ENCODE measurements at regions of chr6 and their contacts with region 1.

Region 1: DNA sequence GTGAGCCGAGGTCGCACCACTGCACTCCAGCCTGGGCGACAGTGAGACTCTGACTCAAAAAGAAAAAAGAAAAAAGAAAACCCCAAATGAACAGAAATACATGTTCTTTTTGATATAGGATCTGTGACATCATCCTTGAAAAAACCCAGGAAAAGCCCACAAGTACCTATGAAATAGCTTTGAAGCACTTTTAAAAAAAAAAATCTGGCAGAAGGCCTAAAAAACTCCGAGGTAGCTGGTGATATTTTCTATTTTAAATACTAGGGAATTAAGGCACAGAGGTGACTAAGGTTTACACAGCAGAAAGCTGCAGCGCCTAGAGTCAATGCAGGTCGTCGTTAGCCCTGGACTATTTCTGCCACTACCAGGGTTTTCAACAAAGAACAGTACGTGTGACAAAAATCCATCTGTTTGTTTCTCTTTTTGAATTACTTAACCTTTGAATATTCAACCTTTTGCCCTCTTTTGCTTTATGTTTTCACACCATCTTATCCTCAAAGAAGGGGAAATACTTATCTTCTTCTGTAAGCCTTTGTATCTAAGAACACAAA is 39.4 kb upstream of the EEF1A1 start:
- DNase-seq: no peak
- H3K4me3 ChIP-seq: no peak overlapping the region
- H3K27ac ChIP-seq: no peak overlapping the region
- H3K4me1 ChIP-seq: peaks cover 0 to 7% (median 4%) of the 10 kb centered on the region in 4 experiments; a peak in 5 of 7 replicates
- H3K27me3 ChIP-seq: no peaks in the 10 kb centered on the region
- CTCF ChIP-seq: no peak
- EP300 ChIP-seq: no peak
- POLR2A ChIP-seq: no peak
- RAD21 ChIP-seq: no peak

Region 2: GRCh38 chr6:73285674-73286283 is 274.5 kb before region 1 on chr6:
- CTCF ChIA-PET with region 1: no interaction called
- POLR2A ChIA-PET with region 1: no interaction called
- DNase-seq: no peak
- H3K4me3 ChIP-seq: no peak overlapping the region
- H3K27ac ChIP-seq: no peak overlapping the region
- H3K4me1 ChIP-seq: no peaks in the 10 kb centered on the region
- H3K27me3 ChIP-seq: no peaks in the 10 kb centered on the region
- CTCF ChIP-seq: peak in 2 of 3 experiments; percentile 46 to 47; a peak in 2 of 4 replicates
- EP300 ChIP-seq: no peak
- POLR2A ChIP-seq: no peak
- RAD21 ChIP-seq: peak; percentile 63 to 72

Region 3: DNA sequence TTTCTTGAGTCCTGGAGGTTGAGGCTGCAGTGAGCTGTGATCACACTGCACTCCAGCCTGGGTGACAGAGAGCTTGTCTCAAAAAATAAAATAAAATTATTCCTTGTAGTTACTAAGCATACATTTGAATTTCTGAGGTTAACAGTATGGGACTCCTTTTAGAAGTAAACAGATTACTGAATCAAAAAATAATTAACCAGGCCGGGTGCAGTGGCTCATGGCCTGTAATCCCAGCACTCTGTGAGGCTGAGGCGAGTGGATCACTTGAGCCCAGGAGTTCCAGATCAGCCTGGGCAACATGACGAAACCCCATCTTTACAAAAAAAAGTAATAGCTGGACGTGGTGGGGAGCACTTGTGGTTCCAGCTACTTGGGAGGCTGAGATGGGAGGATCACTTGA is 17.4 kb before region 1 on chr6:
- CTCF ChIA-PET with region 1: interaction called, 25 read pairs
- POLR2A ChIA-PET with region 1: interaction called, 10 read pairs
- DNase-seq: no peak
- H3K4me3 ChIP-seq: no peak overlapping the region
- H3K27ac ChIP-seq: no peak overlapping the region
- H3K4me1 ChIP-seq: no peaks in the 10 kb centered on the region
- H3K27me3 ChIP-seq: no peaks in the 10 kb centered on the region
- CTCF ChIP-seq: no peak
- EP300 ChIP-seq: no peak
- POLR2A ChIP-seq: no peak
- RAD21 ChIP-seq: no peak

Region 4: DNA sequence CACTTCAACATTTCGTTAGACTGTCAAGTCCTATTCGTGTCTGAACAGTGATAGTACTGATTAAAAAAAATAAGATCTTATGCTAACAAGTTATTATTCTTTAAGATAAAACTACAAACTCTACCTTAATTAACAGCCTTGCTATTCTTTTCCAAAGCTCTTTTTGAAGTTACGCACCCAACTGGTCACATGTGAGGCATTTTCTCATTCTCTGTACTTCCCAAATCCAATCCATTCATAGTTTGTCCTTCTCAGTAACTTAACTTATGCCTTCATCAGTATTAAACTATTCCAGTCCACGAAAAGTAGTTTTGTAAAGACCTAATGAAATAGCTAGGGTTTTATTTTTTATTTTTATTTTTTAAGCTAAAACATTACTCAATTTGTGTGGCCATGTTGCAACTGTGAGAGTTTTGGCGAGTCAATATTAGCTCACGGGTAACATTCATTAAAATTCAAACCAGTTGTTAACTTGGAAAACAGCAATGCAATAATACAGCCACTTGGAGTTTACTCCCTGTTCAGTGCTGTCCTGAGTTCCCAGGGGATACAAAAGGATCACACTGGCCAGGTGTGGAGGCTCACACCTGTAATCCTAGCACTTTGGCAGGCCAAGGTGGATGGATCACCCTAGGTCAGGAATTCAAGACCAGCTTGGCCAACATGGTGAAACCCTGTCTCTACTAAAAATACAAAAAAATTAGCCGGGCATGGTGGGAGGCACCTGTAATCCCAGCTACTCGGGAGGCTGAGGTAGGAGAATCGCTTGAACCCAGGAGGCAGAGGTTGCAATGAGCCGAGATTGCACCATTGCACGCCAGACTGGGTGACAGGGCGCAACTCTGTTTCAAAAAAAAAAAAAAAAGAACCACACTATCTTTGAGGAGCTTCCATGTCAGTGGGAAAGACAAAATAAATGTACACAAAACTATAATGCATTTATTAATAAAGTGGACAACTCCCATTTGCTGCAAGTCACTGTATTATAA is 11.5 kb before region 1 on chr6:
- CTCF ChIA-PET with region 1: interaction called, 25 read pairs
- POLR2A ChIA-PET with region 1: interaction called, 3 read pairs
- DNase-seq: no peak
- H3K4me3 ChIP-seq: no peak overlapping the region
- H3K27ac ChIP-seq: no peak overlapping the region
- H3K4me1 ChIP-seq: no peaks in the 10 kb centered on the region
- H3K27me3 ChIP-seq: no peaks in the 10 kb centered on the region
- CTCF ChIP-seq: no peak
- EP300 ChIP-seq: no peak
- POLR2A ChIP-seq: no peak
- RAD21 ChIP-seq: no peak

Region 5: GRCh38 chr6:73580247-73581149 is 20.2 kb after region 1 on chr6:
- CTCF ChIA-PET with region 1: interaction called, 12 read pairs
- POLR2A ChIA-PET with region 1: interaction called, 82 read pairs
- DNase-seq: peak; percentile 94
- H3K4me3 ChIP-seq: peak overlapping the region; percentile 7 to 48 (median 36); a peak in 4 of 8 replicates
- H3K27ac ChIP-seq: peak overlapping the region; percentile 97
- H3K4me1 ChIP-seq: peaks cover 21 to 36% (median 24%) of the 10 kb centered on the region in 4 experiments
- H3K27me3 ChIP-seq: no peaks in the 10 kb centered on the region
- CTCF ChIP-seq: peak; percentile 29 to 74 (median 69)
- EP300 ChIP-seq: peak; percentile 25 to 93; a peak in 2 of 3 replicates
- POLR2A ChIP-seq: 0 out of 3 replicates have a peak, but pooled peaks of 1 of the 2 experiments have one; percentile 15
- RAD21 ChIP-seq: peak in 1 of 2 experiments; percentile 45; a peak in 3 of 4 replicates

Region 6: DNA sequence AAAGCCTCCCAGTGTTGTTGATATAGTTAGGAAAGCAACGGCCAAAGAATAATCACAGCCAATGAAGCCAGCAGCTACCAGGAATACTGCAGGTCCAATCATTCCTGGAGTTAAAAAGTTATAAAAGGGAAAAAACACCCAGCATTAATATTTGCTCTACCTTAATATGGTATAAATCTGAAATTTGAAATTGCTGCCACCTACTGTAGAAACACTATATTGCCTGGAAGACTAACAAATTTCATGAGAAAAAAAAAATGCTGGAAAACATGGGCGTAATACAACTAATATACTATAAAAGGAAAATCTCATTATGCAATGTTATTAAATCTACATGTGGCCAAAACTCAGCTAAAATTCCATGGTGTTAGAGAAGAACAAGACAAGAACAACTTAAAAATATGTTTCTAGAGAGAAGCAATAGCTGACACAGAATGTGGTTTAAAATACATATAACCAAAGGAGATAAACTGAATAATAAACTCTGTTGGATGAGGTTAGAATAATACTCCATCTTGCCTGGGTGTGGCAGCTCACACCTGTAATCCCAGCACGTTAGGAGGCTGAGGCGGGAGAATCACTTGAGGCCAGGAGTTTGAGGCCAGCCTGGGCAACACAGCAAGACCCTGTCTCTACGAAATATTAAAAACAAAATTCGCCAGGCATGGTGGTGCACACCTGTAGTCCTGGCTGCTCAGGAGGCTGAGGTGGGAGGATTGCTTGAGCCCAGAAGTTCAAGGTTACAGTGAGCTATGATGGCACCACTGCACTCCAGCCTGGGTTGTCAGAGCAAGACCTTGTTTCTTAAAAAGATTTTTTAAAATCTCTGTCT is 50.4 kb after region 1 on chr6:
- CTCF ChIA-PET with region 1: interaction called, 21 read pairs
- POLR2A ChIA-PET with region 1: interaction called, 5 read pairs
- DNase-seq: no peak
- H3K4me3 ChIP-seq: no peak overlapping the region
- H3K27ac ChIP-seq: no peak overlapping the region
- H3K4me1 ChIP-seq: no peaks in the 10 kb centered on the region
- H3K27me3 ChIP-seq: no peaks in the 10 kb centered on the region
- CTCF ChIP-seq: peak in 2 of 3 experiments; percentile 1 to 35; a peak in 2 of 4 replicates
- EP300 ChIP-seq: no peak
- POLR2A ChIP-seq: no peak
- RAD21 ChIP-seq: peak; percentile 55 to 60